ENCODE measurements at regions of chr12 and their contacts with region 1.

Region 1: DNA sequence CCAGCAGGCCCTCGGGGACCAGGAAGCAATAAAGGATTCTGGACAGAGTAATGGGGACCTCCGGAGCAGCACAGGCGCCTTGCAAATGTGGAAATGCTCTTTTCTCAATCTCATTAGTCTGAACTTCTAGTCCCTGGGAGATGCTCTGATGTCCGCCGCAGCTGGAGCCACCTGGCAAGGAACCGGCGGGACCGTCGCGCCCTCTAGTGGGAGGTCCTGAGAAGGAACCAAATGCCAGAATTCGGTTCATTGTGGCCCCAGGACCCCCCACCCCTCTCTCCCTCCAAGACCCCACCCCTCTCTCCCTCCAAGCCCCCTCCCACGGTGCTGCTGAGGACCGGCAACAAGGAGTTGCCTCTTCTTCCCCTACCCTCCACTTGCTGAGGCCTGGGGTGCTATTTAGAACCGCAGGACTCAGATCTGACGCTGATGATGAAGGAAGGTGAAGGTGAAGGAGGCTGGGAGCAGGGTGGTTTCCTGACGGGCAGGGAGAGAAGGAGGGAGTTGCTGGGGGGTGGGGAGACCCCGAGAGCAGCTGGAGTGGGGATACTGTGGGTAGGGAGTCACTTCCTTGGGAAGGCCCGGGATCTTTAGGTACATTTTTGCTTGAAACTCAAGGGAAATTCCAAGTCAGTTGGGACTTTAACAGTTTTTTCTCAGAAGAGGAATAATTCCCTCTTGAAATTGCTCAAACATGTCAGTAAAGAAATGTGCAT is 42.5 kb downstream of the SMIM41 start:
- DNase-seq: peak; percentile 89
- H3K4me3 Mint-ChIP-seq: no peak overlapping the region
- H3K27ac Mint-ChIP-seq: no peak overlapping the region
- H3K4me1 Mint-ChIP-seq: peaks cover 20% of the 10 kb centered on the region
- H3K27me3 Mint-ChIP-seq: peaks cover 18% of the 10 kb centered on the region

Region 2: DNA sequence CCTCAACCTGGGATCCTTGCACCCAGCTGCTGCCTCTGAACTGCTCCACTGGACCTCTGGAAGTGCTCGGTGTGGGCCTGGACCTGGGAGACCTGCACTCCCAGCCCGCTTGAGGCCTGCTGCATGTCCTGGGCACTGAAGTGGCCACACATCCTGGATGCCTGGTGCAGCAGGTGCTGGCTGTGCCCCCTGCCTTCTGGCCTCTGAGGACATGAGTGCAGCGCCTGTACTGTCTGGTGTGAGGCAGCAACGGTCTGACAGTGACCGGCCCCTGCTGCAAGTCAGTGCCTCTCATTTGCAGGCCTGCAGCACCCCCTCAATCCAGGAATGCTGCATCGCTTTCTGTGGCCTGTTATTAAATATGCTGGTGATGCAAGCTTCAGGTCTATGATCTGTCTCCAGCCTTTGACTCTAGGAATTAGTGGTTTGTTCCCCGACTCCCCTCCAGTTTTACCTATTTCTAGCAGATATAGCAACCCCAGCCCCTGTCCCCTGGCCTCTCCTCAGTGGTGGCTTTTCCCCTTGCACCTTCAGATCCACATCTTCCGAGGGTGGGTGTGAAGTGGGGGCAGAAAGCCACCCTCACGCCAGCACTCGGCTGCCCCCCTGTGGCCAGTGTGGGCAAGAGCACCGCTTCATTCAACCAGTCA is 38.9 kb before region 1 on chr12:
- intact Hi-C with region 1: loop called (anchors 5 kb)
- DNase-seq: peak; percentile 91
- H3K4me3 Mint-ChIP-seq: no peak overlapping the region
- H3K27ac Mint-ChIP-seq: peak overlapping the region; percentile 3
- H3K4me1 Mint-ChIP-seq: peaks cover 7% of the 10 kb centered on the region
- H3K27me3 Mint-ChIP-seq: peaks cover 12% of the 10 kb centered on the region

Region 3: GRCh38 chr12:52139552-52140062 is 17.6 kb after region 1 on chr12:
- intact Hi-C with region 1: no loop called
- DNase-seq: peak; percentile 82
- H3K4me3 Mint-ChIP-seq: no peak overlapping the region
- H3K27ac Mint-ChIP-seq: no peak overlapping the region
- H3K4me1 Mint-ChIP-seq: no peaks in the 10 kb centered on the region
- H3K27me3 Mint-ChIP-seq: peaks cover 5% of the 10 kb centered on the region

Measured in activated CD4-positive, alpha-beta T cell treated with anti-CD3 and anti-CD28 coated beads, Interleukin-2, amount 10 ng/mL, durations not matched to agents 24 days and 14 days (primary cell).